ENCODE measurements at regions of chr13 and their contacts with region 1.

Region 1: GRCh38 chr13:95403828-95404522 is 102.7 kb upstream of the ABCC4 start:
- DNase-seq: peak; percentile 43 to 81 (median 71)
- ATAC-seq: peak; percentile 89
- H3K4me3 ChIP-seq: peak overlapping the region; percentile 56
- H3K4me3 Mint-ChIP-seq: peak overlapping the region; percentile 80 to 97 (median 96)
- H3K27ac ChIP-seq: no peak overlapping the region
- H3K27ac Mint-ChIP-seq: peak overlapping the region in 5 of 9 donors; percentile 5 to 68 (median 17)
- H3K4me1 ChIP-seq: no peaks in the 10 kb centered on the region
- H3K4me1 Mint-ChIP-seq: peaks cover 5 to 13% (median 9%) of the 10 kb centered on the region in 7 donors
- H3K27me3 ChIP-seq: no peaks in the 10 kb centered on the region
- H3K27me3 Mint-ChIP-seq: peaks cover 0 to 11% (median 9%) of the 10 kb centered on the region in 5 donors

Region 2: DNA sequence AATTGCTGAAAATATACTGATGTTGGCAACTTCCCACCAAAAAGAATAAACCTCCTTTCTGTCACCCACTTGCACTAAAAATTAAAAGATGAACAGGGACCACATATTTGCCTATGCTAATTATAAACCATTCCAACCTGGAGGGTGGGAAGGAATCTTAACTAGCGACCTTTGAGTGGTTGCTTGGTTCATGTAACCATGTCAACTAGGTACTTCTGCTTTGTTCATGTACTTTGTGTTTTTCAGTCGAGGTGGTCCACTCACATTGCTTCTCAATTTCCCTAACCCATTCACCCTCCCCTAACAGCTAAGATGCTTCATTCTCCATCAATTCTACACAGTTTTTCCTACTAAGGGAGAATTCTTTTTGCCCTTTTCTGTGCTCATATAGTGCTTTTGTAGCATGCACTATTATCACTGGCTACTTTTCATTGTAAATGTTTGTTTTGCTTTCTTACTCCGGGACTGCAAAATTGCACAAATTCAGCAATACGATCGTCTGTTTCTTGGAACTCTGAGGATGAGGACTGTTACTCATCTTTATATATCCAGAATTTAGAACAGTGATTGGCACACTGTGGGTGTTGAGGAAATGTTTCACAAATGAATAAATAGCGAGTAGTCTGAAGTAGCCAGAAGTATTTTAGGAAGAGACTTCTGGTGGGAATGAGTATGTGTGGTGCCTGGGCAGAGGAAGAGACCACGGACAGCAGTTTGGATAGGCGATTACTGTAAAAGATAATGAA is 1989.8 kb before region 1 on chr13:
- CTCF ChIA-PET with region 1: no interaction called
- POLR2A ChIA-PET with region 1: no interaction called
- intact Hi-C with region 1: no loop called
- DNase-seq: no peak
- ATAC-seq: no peak
- H3K4me3 ChIP-seq: no peak overlapping the region
- H3K4me3 Mint-ChIP-seq: no peak overlapping the region
- H3K27ac ChIP-seq: no peak overlapping the region
- H3K27ac Mint-ChIP-seq: no peak overlapping the region
- H3K4me1 ChIP-seq: no peaks in the 10 kb centered on the region
- H3K4me1 Mint-ChIP-seq: no peaks in the 10 kb centered on the region
- H3K27me3 ChIP-seq: no peaks in the 10 kb centered on the region
- H3K27me3 Mint-ChIP-seq: no peaks in the 10 kb centered on the region

Region 3: GRCh38 chr13:94620286-94620896 is 783.6 kb before region 1 on chr13:
- CTCF ChIA-PET with region 1: interaction called, 7 read pairs
- POLR2A ChIA-PET with region 1: no interaction called
- intact Hi-C with region 1: loop called (anchors 1 kb)
- DNase-seq: peak in 3 of 9 donors; percentile 19 to 32 (median 26)
- ATAC-seq: peak; percentile 73
- H3K4me3 ChIP-seq: no peak overlapping the region
- H3K4me3 Mint-ChIP-seq: no peak overlapping the region
- H3K27ac ChIP-seq: no peak overlapping the region
- H3K27ac Mint-ChIP-seq: peak overlapping the region in 1 of 9 donors; percentile 8
- H3K4me1 ChIP-seq: no peaks in the 10 kb centered on the region
- H3K4me1 Mint-ChIP-seq: peaks cover 0 to 16% (median 13%) of the 10 kb centered on the region in 7 donors
- H3K27me3 ChIP-seq: no peaks in the 10 kb centered on the region
- H3K27me3 Mint-ChIP-seq: no peaks in the 10 kb centered on the region

Region 4: DNA sequence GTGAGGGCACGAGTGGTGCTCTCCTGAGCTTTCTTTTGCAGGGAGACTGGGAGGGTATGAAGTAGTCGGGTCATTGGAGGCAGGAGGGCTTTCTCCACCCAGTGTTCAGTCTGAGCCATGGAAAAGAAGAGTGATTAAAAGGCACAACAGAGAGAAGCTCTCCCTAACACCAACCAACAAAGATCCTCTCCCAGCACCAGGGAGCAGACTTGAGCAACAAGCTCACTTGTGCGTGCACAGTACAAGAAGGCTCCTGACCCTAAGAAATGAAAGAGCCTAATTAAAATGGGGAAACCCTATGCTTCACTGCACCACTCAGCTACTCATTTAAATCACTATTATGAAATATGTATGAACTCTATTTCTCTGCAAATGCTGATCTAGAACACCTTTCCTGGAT is 415.3 kb before region 1 on chr13:
- CTCF ChIA-PET with region 1: no interaction called
- POLR2A ChIA-PET with region 1: no interaction called
- intact Hi-C with region 1: loop called in 1 of 2 experiments (anchors 5 kb)
- DNase-seq: no peak
- ATAC-seq: no peak
- H3K4me3 ChIP-seq: no peak overlapping the region
- H3K4me3 Mint-ChIP-seq: no peak overlapping the region
- H3K27ac ChIP-seq: no peak overlapping the region
- H3K27ac Mint-ChIP-seq: no peak overlapping the region
- H3K4me1 ChIP-seq: no peaks in the 10 kb centered on the region
- H3K4me1 Mint-ChIP-seq: peaks cover 0 to 2% (median 0%) of the 10 kb centered on the region in 7 donors
- H3K27me3 ChIP-seq: no peaks in the 10 kb centered on the region
- H3K27me3 Mint-ChIP-seq: peaks cover 9 to 16% (median 14%) of the 10 kb centered on the region in 5 donors

Region 5: DNA sequence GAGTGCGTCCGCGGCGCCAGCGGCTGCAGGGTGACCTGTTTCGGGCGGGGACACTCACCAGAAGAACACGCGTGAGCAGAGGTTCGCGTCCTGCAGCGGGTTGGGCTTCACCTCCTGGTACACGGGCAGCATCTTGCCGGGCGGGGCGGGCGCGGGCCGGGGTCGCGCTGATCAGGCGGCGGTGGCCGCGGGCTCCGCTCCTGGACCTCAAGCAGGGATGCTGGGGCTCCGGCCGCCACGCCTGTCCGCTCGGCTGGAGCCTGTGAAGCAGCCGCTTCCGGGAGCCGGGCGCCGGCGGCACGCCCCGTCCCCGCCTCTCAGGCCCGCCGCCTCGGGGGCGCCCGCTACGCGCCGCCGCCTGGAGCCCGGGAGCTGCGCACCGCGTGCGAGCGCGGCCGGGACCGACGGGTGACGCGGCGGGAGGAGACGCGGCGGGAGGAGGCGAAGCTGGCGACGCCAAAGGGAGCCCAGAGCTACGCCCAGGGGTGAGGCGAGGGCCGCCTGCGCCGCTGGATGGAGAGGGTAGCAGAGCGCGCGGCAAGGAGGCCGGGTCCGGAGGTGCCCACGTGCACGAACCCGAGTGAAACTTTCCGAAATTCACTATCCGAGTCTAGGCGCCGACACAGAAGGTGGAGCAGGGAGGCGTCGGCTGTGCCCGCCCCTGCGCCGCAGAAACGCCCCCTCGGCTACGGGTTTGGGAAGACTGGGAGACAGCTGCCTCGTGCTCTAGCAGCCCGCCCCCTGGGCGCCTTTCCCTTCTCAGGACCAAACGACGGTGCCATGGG is 102.6 kb before region 1 on chr13 and contains the start of gene ABCC4:
- CTCF ChIA-PET with region 1: interaction called, 12 read pairs
- POLR2A ChIA-PET with region 1: no interaction called
- intact Hi-C with region 1: loop called (anchors 1 kb)
- DNase-seq: peak; percentile 22 to 78 (median 48)
- ATAC-seq: peak; percentile 86
- H3K4me3 ChIP-seq: peak within 1 kb of the TSS; percentile 50
- H3K4me3 Mint-ChIP-seq: peak within 1 kb of the TSS; percentile 84 to 96 (median 87)
- H3K27ac ChIP-seq: peak within 1 kb of the TSS; percentile 41
- H3K27ac Mint-ChIP-seq: peak within 1 kb of the TSS in 8 of 9 donors; percentile 6 to 86 (median 66)
- H3K4me1 ChIP-seq: peaks cover 0 to 5% of the 10 kb centered on the region in 2 donors
- H3K4me1 Mint-ChIP-seq: peaks cover 7 to 41% (median 27%) of the 10 kb centered on the region in 7 donors
- H3K27me3 ChIP-seq: no peaks in the 10 kb centered on the region
- H3K27me3 Mint-ChIP-seq: peaks cover 0 to 15% (median 0%) of the 10 kb centered on the region in 5 donors
- total RNA-seq, gene ABCC4: 5.8 to 9.2 (median 7.5) TPM

Region 6: GRCh38 chr13:95335667-95336066 is 68.3 kb before region 1 on chr13:
- CTCF ChIA-PET with region 1: no interaction called
- POLR2A ChIA-PET with region 1: no interaction called
- intact Hi-C with region 1: no loop called
- DNase-seq: no peak
- ATAC-seq: no peak
- H3K4me3 ChIP-seq: no peak overlapping the region
- H3K4me3 Mint-ChIP-seq: no peak overlapping the region
- H3K27ac ChIP-seq: no peak overlapping the region
- H3K27ac Mint-ChIP-seq: no peak overlapping the region
- H3K4me1 ChIP-seq: no peaks in the 10 kb centered on the region
- H3K4me1 Mint-ChIP-seq: no peaks in the 10 kb centered on the region
- H3K27me3 ChIP-seq: no peaks in the 10 kb centered on the region
- H3K27me3 Mint-ChIP-seq: peaks cover 0 to 5% (median 0%) of the 10 kb centered on the region in 5 donors

Region 7: GRCh38 chr13:95388420-95389079 is 15.4 kb before region 1 on chr13:
- CTCF ChIA-PET with region 1: interaction called, 11 read pairs
- POLR2A ChIA-PET with region 1: no interaction called
- intact Hi-C with region 1: no loop called
- DNase-seq: no peak
- ATAC-seq: no peak
- H3K4me3 ChIP-seq: no peak overlapping the region
- H3K4me3 Mint-ChIP-seq: no peak overlapping the region
- H3K27ac ChIP-seq: no peak overlapping the region
- H3K27ac Mint-ChIP-seq: no peak overlapping the region
- H3K4me1 ChIP-seq: no peaks in the 10 kb centered on the region
- H3K4me1 Mint-ChIP-seq: peaks cover 0 to 6% (median 0%) of the 10 kb centered on the region in 7 donors
- H3K27me3 ChIP-seq: no peaks in the 10 kb centered on the region
- H3K27me3 Mint-ChIP-seq: peaks cover 7 to 27% (median 13%) of the 10 kb centered on the region in 5 donors

Region 8: DNA sequence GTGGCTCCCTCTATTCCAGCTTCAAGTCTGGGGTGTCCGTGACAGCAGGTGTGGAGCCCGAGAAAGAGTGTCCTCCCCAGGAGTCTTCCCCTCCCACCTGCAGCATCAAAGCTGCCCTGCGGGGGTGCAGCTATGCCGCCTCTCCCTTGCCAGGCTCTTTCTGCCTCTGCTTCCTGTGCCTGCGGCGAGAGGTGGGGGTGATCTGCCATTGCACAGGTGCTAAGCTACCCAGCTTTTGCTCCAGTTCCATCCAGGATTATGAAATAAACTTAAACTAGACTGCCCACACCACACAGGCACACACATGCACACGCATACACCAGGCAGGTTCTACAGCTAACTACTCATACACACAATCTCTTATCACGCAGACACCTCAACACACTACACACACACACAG is 43.8 kb after region 1 on chr13:
- CTCF ChIA-PET with region 1: no interaction called
- POLR2A ChIA-PET with region 1: no interaction called
- intact Hi-C with region 1: no loop called
- DNase-seq: no peak
- ATAC-seq: peak; percentile 16
- H3K4me3 ChIP-seq: no peak overlapping the region
- H3K4me3 Mint-ChIP-seq: no peak overlapping the region
- H3K27ac ChIP-seq: no peak overlapping the region
- H3K27ac Mint-ChIP-seq: no peak overlapping the region
- H3K4me1 ChIP-seq: no peaks in the 10 kb centered on the region
- H3K4me1 Mint-ChIP-seq: peaks cover 0 to 6% (median 5%) of the 10 kb centered on the region in 7 donors
- H3K27me3 ChIP-seq: peaks cover 0 to 3% of the 10 kb centered on the region in 2 donors
- H3K27me3 Mint-ChIP-seq: peaks cover 5 to 35% (median 19%) of the 10 kb centered on the region in 5 donors

Region 9: DNA sequence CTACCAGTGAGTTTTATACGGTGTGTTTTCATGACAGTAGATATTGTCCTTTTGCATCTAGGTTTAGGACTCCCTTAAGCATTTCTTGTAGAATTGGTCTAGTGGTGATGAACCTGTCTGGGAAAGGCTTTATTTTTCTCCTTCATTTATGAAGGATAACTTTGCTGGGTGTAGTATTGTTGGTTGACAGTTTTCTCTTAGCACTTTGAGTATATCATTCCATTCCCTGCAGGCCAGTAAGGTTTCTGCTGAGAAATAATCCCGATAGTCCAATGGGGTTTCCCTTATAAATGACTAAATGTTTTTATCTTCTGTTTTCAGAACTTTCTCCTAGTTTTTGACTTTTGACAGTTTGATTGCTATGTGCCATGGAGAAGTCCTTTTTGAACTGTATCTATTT is 330.1 kb after region 1 on chr13:
- CTCF ChIA-PET with region 1: no interaction called
- POLR2A ChIA-PET with region 1: no interaction called
- intact Hi-C with region 1: no loop called
- DNase-seq: no peak
- ATAC-seq: no peak
- H3K4me3 ChIP-seq: no peak overlapping the region
- H3K4me3 Mint-ChIP-seq: no peak overlapping the region
- H3K27ac ChIP-seq: no peak overlapping the region
- H3K27ac Mint-ChIP-seq: peak overlapping the region in 1 of 9 donors; percentile 9
- H3K4me1 ChIP-seq: no peaks in the 10 kb centered on the region
- H3K4me1 Mint-ChIP-seq: peaks cover 4 to 20% (median 15%) of the 10 kb centered on the region in 7 donors
- H3K27me3 ChIP-seq: no peaks in the 10 kb centered on the region
- H3K27me3 Mint-ChIP-seq: no peaks in the 10 kb centered on the region

Region 10: DNA sequence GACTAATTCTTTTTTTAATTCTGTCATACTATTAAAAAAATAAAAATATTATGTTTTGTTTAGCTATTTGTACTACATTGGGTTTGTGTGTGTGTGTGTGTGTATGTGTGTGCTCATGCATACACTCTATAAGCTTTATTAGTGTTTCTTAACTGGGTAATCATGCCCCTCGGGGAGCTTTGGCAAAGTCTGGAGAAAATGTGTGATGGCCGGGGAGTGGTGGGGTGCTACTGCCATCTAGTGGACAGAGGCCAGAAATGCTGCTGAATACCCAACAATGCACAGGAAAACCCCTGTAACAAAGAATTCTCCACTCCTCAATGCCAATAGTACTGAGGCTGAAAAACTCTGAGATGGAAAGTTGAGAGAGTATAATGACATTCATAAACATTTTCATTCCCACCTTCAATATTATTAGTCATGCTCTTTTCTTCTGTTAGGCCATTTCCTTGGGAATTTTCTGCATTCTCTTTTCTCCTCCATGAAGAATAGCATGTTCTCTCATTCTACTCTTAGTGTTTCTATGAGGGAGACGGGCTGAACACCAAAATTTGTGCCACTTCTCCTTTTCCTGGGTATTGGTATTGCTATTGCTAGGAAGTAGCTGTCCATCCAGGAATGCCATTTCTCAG is 430.3 kb after region 1 on chr13:
- CTCF ChIA-PET with region 1: interaction called, 3 read pairs
- POLR2A ChIA-PET with region 1: no interaction called
- intact Hi-C with region 1: loop called (anchors 5 to 10 kb)
- DNase-seq: peak; percentile 31 to 71 (median 58)
- ATAC-seq: peak; percentile 90
- H3K4me3 ChIP-seq: no peak overlapping the region
- H3K4me3 Mint-ChIP-seq: no peak overlapping the region
- H3K27ac ChIP-seq: no peak overlapping the region
- H3K27ac Mint-ChIP-seq: no peak overlapping the region
- H3K4me1 ChIP-seq: no peaks in the 10 kb centered on the region
- H3K4me1 Mint-ChIP-seq: peaks cover 0 to 2% (median 0%) of the 10 kb centered on the region in 7 donors
- H3K27me3 ChIP-seq: no peaks in the 10 kb centered on the region
- H3K27me3 Mint-ChIP-seq: peaks cover 18 to 36% (median 20%) of the 10 kb centered on the region in 5 donors